ENCODE measurements at regions of chr3 and their contacts with region 1.

Region 1: DNA sequence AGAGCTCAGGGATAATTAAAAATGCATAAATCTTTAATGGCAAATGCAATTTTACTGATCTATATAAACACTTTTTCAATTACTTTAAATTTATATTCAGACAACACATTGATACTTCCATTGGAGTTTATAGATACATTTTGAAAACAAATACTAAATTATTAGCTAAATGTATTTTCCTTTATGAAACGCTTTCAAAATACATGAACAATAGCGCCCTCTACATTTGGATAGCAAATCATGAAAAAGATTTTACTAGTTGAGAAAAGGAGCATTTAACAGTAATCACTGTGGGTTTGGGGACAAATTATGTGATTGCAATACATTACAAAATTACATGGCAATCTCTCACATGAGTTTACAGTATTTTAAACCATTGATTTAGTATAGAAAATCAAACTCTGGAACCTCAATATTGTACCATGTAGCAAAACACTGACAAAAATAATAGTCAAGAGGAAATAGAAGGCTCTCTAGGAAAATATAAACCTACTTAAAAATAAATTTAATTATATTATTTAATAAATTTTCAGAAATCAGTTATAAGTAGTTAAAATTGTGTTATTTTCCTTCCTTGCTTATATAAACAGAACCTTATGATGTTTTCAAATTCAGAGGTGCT is 207.9 kb downstream of the ZIC1 start:
- DNase-seq: no peak
- ATAC-seq: no peak
- H3K4me3 ChIP-seq: no peak overlapping the region
- H3K27ac ChIP-seq: no peak overlapping the region
- H3K4me1 ChIP-seq: no peaks in the 10 kb centered on the region
- H3K27me3 ChIP-seq: no peaks in the 10 kb centered on the region
- CTCF ChIP-seq: peak; percentile 32 to 41 (median 39); a peak in 3 of 6 replicates
- EP300 ChIP-seq: no peak
- POLR2A ChIP-seq: no peak
- RAD21 ChIP-seq: peak; percentile 59

Region 2: DNA sequence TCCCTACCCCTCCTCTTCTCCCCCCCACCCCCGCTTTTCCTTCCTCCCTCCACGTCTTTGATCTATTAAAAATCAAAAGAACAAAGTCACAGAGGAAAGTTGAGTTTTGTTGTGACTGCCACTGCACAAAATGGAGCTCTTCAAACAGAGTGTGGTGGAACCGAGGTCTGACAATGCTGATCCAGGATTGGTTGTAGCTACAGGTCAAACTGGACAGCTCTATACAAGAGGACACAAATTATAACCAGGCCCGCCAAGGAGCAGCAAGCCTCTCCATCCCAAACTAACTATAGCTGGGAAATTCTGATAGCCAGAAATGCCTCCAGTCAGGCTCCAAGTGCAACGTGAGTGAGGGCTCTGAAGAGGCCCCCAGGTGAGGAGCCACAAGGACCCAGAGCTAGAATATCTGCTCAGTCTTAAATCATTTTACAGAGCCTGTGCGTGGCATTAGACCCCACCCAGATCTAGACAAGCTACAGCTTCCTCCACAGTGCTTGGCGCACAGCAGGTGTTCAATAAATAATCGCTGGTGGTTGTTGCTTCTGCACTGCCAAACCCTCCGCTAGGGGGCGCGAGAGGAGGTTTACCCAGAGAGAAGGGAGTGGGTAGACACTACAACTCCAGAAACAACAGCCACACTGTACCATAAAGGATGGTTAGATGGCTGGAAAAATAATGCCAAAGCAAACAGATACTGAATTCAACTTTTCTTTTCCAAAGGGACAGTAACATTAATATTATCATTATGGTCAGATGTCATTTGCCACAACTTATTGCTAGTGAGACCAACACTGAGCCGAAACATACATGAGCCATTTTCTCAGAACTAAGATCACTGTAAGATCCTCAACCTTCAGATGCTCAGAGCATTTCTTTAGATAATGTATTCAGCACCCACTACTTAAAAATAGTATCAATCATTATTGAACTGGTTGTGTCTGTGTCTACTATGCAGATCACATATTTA is 255.4 kb before region 1 on chr3:
- CTCF ChIA-PET with region 1: interaction called, 3 read pairs
- POLR2A ChIA-PET with region 1: no interaction called
- RAD21 ChIA-PET with region 1: interaction called, 5 read pairs
- SMC1A ChIA-PET with region 1: interaction called, 15 read pairs
- in situ Hi-C with region 1: no loop called
- intact Hi-C with region 1: no loop called
- DNase-seq: no peak
- ATAC-seq: peak; percentile 94
- H3K4me3 ChIP-seq: no peak overlapping the region
- H3K27ac ChIP-seq: no peak overlapping the region
- H3K4me1 ChIP-seq: no peaks in the 10 kb centered on the region
- H3K27me3 ChIP-seq: peaks cover 5 to 26% of the 10 kb centered on the region in 2 experiments
- CTCF ChIP-seq: peak; percentile 61 to 66 (median 64)
- EP300 ChIP-seq: no peak
- POLR2A ChIP-seq: no peak
- RAD21 ChIP-seq: peak; percentile 41; the same call in 1 of the 2 replicates

Region 3: GRCh38 chr3:147383617-147384016 is 233.5 kb before region 1 on chr3:
- CTCF ChIA-PET with region 1: interaction called, 17 read pairs
- POLR2A ChIA-PET with region 1: no interaction called
- RAD21 ChIA-PET with region 1: interaction called, 4 read pairs
- SMC1A ChIA-PET with region 1: interaction called, 8 read pairs
- in situ Hi-C with region 1: no loop called
- intact Hi-C with region 1: loop called (anchors 10 kb)
- DNase-seq: no peak
- ATAC-seq: peak; percentile 73
- H3K4me3 ChIP-seq: no peak overlapping the region
- H3K27ac ChIP-seq: no peak overlapping the region
- H3K4me1 ChIP-seq: no peaks in the 10 kb centered on the region
- H3K27me3 ChIP-seq: peaks cover 1 to 6% of the 10 kb centered on the region in 2 experiments; a peak in 3 of 4 replicates
- CTCF ChIP-seq: peak; percentile 22 to 33 (median 31); a peak in 4 of 6 replicates
- EP300 ChIP-seq: no peak
- POLR2A ChIP-seq: no peak
- RAD21 ChIP-seq: peak; percentile 57